PC-3 (cell line): ENCODE measurements at regions of chr3 and their contacts with region 1.

Region 1: GRCh38 chr3:180250169-180250568 is 213.4 kb upstream of the PEX5L start:
- DNase-seq: peak; percentile 95
- ATAC-seq: peak; percentile 88
- H3K4me3 ChIP-seq: no peak overlapping the region
- H3K27ac ChIP-seq: peak overlapping the region; percentile 58
- H3K4me1 ChIP-seq: peaks cover 46% of the 10 kb centered on the region
- H3K27me3 ChIP-seq: no peaks in the 10 kb centered on the region
- CTCF ChIP-seq: no peak

Region 2: GRCh38 chr3:180048103-180048502 is 202.1 kb before region 1 on chr3:
- CTCF ChIA-PET with region 1: no interaction called
- POLR2A ChIA-PET with region 1: no interaction called
- intact Hi-C with region 1: loop called (anchors 10 kb)
- DNase-seq: no peak
- ATAC-seq: no peak
- H3K4me3 ChIP-seq: no peak overlapping the region
- H3K27ac ChIP-seq: no peak overlapping the region
- H3K4me1 ChIP-seq: no peaks in the 10 kb centered on the region
- H3K27me3 ChIP-seq: no peaks in the 10 kb centered on the region
- CTCF ChIP-seq: no peak

Region 3: GRCh38 chr3:180277041-180277440 is 26.9 kb after region 1 on chr3:
- CTCF ChIA-PET with region 1: no interaction called
- POLR2A ChIA-PET with region 1: no interaction called
- intact Hi-C with region 1: loop called (anchors 1 kb)
- DNase-seq: peak; percentile 85
- ATAC-seq: peak; percentile 82
- H3K4me3 ChIP-seq: no peak overlapping the region
- H3K27ac ChIP-seq: peak overlapping the region; percentile 62
- H3K4me1 ChIP-seq: peaks cover 54% of the 10 kb centered on the region
- H3K27me3 ChIP-seq: no peaks in the 10 kb centered on the region
- CTCF ChIP-seq: no peak

Region 4: GRCh38 chr3:180408654-180409053 is 158.5 kb after region 1 on chr3:
- CTCF ChIA-PET with region 1: no interaction called
- POLR2A ChIA-PET with region 1: no interaction called
- intact Hi-C with region 1: loop called (anchors 2 kb)
- DNase-seq: peak; percentile 95
- ATAC-seq: peak; percentile 94
- H3K4me3 ChIP-seq: peak overlapping the region; percentile 47
- H3K27ac ChIP-seq: peak overlapping the region; percentile 93
- H3K4me1 ChIP-seq: peaks cover 31% of the 10 kb centered on the region
- H3K27me3 ChIP-seq: no peaks in the 10 kb centered on the region
- CTCF ChIP-seq: no peak

Region 5: GRCh38 chr3:180898572-180898971 is 648.4 kb after region 1 on chr3:
- CTCF ChIA-PET with region 1: no interaction called
- POLR2A ChIA-PET with region 1: no interaction called
- intact Hi-C with region 1: no loop called
- DNase-seq: no peak
- ATAC-seq: no peak
- H3K4me3 ChIP-seq: no peak overlapping the region
- H3K27ac ChIP-seq: no peak overlapping the region
- H3K4me1 ChIP-seq: no peaks in the 10 kb centered on the region
- H3K27me3 ChIP-seq: no peaks in the 10 kb centered on the region
- CTCF ChIP-seq: no peak